ENCODE measurements at regions of chr3 and their contacts with region 1.

Region 1: GRCh38 chr3:24237971-24238767 is 256.5 kb downstream of the THRB start:
- DNase-seq: peak; percentile 85
- H3K4me3 Mint-ChIP-seq: no peak overlapping the region
- H3K27ac Mint-ChIP-seq: peak overlapping the region; percentile 91
- H3K4me1 Mint-ChIP-seq: peaks cover 40% of the 10 kb centered on the region
- H3K27me3 Mint-ChIP-seq: no peaks in the 10 kb centered on the region
- CTCF ChIP-seq: peak; percentile 65

Region 2: DNA sequence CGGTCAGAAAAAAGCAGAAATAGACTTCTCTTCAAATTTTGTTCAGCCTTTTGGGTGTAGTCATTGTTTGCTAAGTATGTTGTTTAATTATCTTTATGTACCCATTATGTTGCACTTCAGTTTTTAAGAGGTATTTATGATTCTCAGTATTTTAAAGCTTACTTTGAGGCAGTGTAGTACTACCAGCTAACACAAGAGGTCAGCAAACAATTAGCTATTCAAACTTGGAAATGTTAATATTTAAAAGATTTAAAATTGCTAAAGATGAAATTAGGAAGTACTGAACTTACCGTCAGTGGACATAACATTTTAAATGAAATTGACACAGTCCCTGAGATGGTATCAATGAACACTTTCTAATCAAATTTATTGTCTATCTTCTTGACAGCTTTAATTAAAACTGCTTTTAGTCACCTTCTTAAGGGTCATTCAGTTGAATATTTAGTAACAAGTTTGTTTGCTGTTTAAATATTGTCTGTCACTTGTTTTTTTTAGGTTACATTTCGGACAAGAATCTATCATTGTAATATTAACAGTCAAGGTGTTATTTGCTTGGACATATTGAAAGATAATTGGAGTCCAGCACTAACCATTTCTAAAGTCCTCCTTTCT is 349.4 kb before region 1 on chr3:
- CTCF ChIA-PET with region 1: interaction called, 4 read pairs
- POLR2A ChIA-PET with region 1: no interaction called
- intact Hi-C with region 1: loop called (anchors 5 kb)
- DNase-seq: peak; percentile 35
- H3K4me3 Mint-ChIP-seq: no peak overlapping the region
- H3K27ac Mint-ChIP-seq: no peak overlapping the region
- H3K4me1 Mint-ChIP-seq: peaks cover 6% of the 10 kb centered on the region
- H3K27me3 Mint-ChIP-seq: no peaks in the 10 kb centered on the region
- CTCF ChIP-seq: peak; percentile 72

Region 3: DNA sequence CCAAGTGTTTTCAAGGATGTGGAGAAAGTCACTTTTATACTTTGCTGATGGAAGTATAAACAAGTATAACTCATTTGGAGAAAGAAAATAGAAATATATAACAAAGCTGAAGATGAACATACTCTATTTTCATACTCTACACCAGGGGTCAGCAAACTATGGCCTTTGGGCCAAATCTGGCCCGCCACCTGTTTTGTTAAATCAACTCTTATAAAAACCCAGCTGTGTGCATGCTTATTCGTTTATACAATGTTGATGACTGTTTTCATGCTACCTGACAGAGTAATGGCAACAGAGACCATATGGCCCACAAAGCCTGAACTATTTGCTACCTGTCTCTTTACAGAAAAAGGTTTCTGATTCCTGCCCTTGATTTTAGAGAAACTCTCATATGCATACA is 169.1 kb before region 1 on chr3:
- CTCF ChIA-PET with region 1: interaction called, 7 read pairs
- POLR2A ChIA-PET with region 1: interaction called, 3 read pairs
- intact Hi-C with region 1: loop called (anchors 1 kb)
- DNase-seq: peak; percentile 36
- H3K4me3 Mint-ChIP-seq: no peak overlapping the region
- H3K27ac Mint-ChIP-seq: no peak overlapping the region
- H3K4me1 Mint-ChIP-seq: peaks cover 10% of the 10 kb centered on the region
- H3K27me3 Mint-ChIP-seq: no peaks in the 10 kb centered on the region
- CTCF ChIP-seq: peak; percentile 28

Region 4: DNA sequence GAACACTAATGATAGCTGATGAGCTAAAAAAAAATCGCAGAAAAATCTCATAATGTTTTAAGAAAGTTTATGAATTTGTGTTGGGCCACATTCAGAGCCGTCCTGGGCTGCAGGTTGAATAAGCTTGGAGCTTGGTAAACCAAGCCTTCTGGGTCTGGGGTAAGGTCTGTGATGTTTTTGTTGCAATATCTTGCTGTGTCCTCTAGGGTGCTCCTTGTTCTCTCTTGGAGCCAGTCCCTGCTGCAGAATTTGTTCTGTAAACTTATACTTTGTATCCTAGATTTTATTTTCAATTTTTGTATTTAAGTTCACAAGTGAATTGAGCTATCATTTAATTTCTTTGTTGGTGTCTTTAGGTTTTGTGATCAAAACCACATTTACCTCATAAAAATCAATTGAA is 149.4 kb before region 1 on chr3:
- CTCF ChIA-PET with region 1: interaction called, 7 read pairs
- POLR2A ChIA-PET with region 1: interaction called, 5 read pairs
- intact Hi-C with region 1: loop called (anchors 5 kb)
- DNase-seq: peak; percentile 53
- H3K4me3 Mint-ChIP-seq: no peak overlapping the region
- H3K27ac Mint-ChIP-seq: no peak overlapping the region
- H3K4me1 Mint-ChIP-seq: no peaks in the 10 kb centered on the region
- H3K27me3 Mint-ChIP-seq: no peaks in the 10 kb centered on the region
- CTCF ChIP-seq: peak; percentile 53

Measured in MCF 10A (cell line).